Activated naive CD4-positive, alpha-beta T cell treated with anti-CD3 and anti-CD28 coated beads, Interleukin-2, amount 10 ng/mL, durations not matched to agents 7 days and 5 days (primary cell): ENCODE measurements at regions of chr6 and their contacts with region 1.

Region 1: DNA sequence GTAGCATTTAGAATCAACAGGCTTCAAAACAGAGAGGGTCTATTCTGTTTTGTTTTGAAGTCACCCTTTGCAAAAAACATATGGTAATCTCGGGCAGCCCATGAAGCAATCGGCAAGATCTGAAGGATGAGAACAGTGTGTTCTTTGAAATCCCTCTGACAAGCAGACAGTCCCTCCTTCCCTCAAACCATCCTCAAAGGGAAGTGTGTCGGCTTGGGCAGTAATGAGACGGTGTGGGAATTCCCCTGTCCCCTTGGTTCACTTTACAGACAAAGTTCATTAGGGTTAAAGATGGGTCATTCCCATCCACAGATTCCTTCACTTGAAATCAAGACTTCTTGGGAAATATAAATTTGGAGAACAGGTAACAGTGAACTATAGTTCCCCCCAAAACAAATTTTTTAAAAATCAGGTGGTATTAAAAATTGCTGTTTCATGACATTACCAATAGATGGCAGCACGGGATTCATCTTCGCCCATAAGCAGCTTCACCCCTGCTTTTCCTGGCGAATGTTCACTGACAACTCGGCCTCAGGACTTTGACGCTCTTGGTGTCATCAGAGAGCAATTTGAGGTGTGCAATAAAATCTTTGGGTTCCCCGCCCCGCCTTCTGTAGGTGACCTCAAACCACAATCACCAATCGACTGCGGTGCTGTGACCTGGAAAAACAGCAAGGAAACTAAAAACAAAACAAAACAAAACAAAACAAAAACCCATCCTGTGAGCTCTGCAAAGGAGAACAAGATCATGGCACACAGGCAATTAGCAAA is 159.3 kb upstream of the TNFAIP3 start:
- DNase-seq: peak; percentile 89
- H3K4me3 Mint-ChIP-seq: peak overlapping the region; percentile 40
- H3K27ac Mint-ChIP-seq: peak overlapping the region; percentile 91
- H3K4me1 Mint-ChIP-seq: peaks cover 58% of the 10 kb centered on the region
- H3K27me3 Mint-ChIP-seq: peaks cover 4% of the 10 kb centered on the region

Region 2: GRCh38 chr6:137661601-137662000 is 46.2 kb before region 1 on chr6:
- CTCF ChIA-PET with region 1: interaction called, 10 read pairs
- DNase-seq: peak; percentile 57
- H3K4me3 Mint-ChIP-seq: no peak overlapping the region
- H3K27ac Mint-ChIP-seq: no peak overlapping the region
- H3K4me1 Mint-ChIP-seq: peaks cover 22% of the 10 kb centered on the region
- H3K27me3 Mint-ChIP-seq: peaks cover 6% of the 10 kb centered on the region

Region 3: GRCh38 chr6:137873273-137873762 is 165.5 kb after region 1 on chr6:
- CTCF ChIA-PET with region 1: interaction called, 71 read pairs
- DNase-seq: peak; percentile 48
- H3K4me3 Mint-ChIP-seq: peak overlapping the region; percentile 1
- H3K27ac Mint-ChIP-seq: peak overlapping the region; percentile 76
- H3K4me1 Mint-ChIP-seq: peaks cover 75% of the 10 kb centered on the region
- H3K27me3 Mint-ChIP-seq: no peaks in the 10 kb centered on the region

Region 4: DNA sequence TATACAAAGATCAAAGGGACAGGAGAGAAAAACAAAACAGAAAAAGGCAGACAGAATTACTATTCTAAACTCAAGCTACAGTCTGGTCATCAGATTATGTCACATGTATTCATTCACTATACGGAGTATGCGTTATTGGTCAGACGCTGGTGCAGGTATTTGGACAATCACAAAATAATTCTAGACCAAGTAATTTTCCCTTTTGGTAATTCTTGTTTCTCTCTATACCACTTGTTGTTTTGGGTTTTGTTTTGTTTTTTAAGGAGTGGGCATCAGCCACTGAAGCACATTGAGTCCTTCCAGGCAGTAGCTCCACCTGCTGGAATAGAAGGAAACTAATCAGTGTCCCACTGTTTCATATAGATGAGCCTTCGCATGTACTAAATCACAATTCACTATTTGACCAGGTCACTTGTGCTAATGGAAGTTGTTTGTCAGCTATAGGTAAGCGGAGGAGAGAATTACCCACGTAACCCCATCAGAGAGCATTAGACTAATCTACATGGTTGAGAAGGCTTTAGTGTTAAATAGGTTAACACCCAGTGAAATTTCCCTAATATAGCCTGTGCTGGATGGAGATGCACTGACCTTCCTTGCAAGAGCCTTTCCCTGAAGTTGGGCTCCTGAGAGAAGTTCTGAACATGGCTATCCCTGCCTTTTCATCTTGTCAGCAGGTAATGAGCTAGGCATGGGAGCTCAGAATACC is 237.2 kb after region 1 on chr6:
- CTCF ChIA-PET with region 1: interaction called, 50 read pairs
- DNase-seq: peak; percentile 42
- H3K4me3 Mint-ChIP-seq: no peak overlapping the region
- H3K27ac Mint-ChIP-seq: no peak overlapping the region
- H3K4me1 Mint-ChIP-seq: peaks cover 23% of the 10 kb centered on the region
- H3K27me3 Mint-ChIP-seq: no peaks in the 10 kb centered on the region

Region 5: DNA sequence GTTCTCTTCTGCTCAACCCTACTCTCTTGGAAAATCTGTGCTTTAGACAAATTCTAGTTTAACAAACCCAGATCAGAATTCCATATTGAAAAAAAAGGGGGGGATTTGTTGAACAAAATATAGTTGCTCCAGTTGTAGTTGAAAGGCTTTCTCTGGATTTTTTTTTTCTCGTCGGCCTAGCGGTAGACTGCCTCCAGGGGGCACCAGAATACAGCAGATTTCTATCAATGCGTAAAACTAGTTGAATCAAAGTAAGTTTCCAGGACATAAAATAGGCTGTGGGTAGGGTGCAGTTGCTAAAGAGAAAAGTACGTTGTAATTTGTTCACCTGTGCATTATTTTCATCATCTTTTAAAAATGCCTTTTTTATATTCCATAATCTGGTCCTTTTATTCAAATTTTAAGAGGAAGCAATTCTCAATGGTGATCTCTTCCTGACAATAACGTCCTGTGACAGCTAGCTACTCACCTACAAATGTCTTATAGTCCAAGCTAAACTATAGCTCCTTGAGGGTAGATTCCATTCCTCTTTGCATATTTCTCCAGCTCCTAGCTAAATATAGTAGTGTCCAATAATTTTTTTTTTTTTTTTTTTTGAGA is 294.1 kb after region 1 on chr6:
- CTCF ChIA-PET with region 1: interaction called, 11 read pairs
- DNase-seq: peak; percentile 76
- H3K4me3 Mint-ChIP-seq: no peak overlapping the region
- H3K27ac Mint-ChIP-seq: no peak overlapping the region
- H3K4me1 Mint-ChIP-seq: peaks cover 23% of the 10 kb centered on the region
- H3K27me3 Mint-ChIP-seq: peaks cover 13% of the 10 kb centered on the region